ENCODE measurements at regions of chr9 and their contacts with region 1.

Region 1: GRCh38 chr9:35790385-35791296 is 750 bp upstream of the NPR2 start:
- DNase-seq: peak; percentile 31
- H3K4me3 ChIP-seq: peak overlapping the region; percentile 42
- CTCF ChIP-seq: peak; percentile 82

Region 2: GRCh38 chr9:35774907-35775635 is 15.6 kb before region 1 on chr9:
- CTCF ChIA-PET with region 1: interaction called, 102 read pairs
- POLR2A ChIA-PET with region 1: interaction called, 3 read pairs
- DNase-seq: no peak
- H3K4me3 ChIP-seq: no peak overlapping the region
- CTCF ChIP-seq: no peak

Region 3: GRCh38 chr9:35829084-35829763 is 38.6 kb after region 1 on chr9 and contains the start of gene TMEM8B:
- CTCF ChIA-PET with region 1: interaction called, 163 read pairs
- POLR2A ChIA-PET with region 1: interaction called, 4 read pairs
- DNase-seq: no peak
- H3K4me3 ChIP-seq: peak within 1 kb of the TSS; percentile 69
- CTCF ChIP-seq: no peak

Region 4: DNA sequence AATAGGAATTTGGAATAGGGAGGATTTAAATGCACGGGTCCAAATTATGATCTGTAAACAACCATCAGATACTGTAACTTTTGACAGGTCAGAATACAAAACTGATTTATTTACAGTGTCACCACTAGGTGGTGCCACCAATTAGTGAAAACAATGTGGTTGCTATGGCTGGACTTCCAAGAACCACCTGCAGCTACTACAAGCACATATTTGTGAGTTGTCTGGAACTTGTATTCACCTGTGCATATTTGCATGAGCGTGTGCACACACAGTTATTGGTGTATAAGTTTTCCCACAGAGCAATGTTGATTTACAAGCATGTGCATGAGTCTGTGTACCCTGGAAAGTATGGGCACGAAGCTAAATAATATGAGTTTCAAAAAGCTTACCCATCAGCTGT is 112.4 kb after region 1 on chr9:
- CTCF ChIA-PET with region 1: interaction called, 13 read pairs
- POLR2A ChIA-PET with region 1: interaction called, 7 read pairs
- DNase-seq: no peak
- H3K4me3 ChIP-seq: no peak overlapping the region
- CTCF ChIP-seq: peak; percentile 46

Region 5: GRCh38 chr9:35962126-35962906 is 171.7 kb after region 1 on chr9:
- CTCF ChIA-PET with region 1: interaction called, 10 read pairs
- POLR2A ChIA-PET with region 1: interaction called, 3 read pairs
- DNase-seq: peak; percentile 46
- H3K4me3 ChIP-seq: peak overlapping the region; percentile 45
- CTCF ChIP-seq: no peak

Measured in AG04449 (cell line).